ENCODE measurements at regions of chr9 and their contacts with region 1.

Region 1: GRCh38 chr9:127937388-127938280 is at the start of gene DPM2:
- DNase-seq: peak; percentile 96
- CTCF ChIP-seq: no peak

Region 2: GRCh38 chr9:128034821-128035764 is 97.5 kb after region 1 on chr9:
- in situ Hi-C with region 1: loop called (anchors 25 kb)
- DNase-seq: peak; percentile 82
- CTCF ChIP-seq: peak; percentile 77

Measured in GM13976 (cell line).